Activated CD4-positive, alpha-beta T cell treated with anti-CD3 and anti-CD28 coated beads, Interleukin-2, amount 10 ng/mL, durations not matched to agents 24 days and 14 days (primary cell): ENCODE measurements at regions of chr21 and their contacts with region 1.

Region 1: DNA sequence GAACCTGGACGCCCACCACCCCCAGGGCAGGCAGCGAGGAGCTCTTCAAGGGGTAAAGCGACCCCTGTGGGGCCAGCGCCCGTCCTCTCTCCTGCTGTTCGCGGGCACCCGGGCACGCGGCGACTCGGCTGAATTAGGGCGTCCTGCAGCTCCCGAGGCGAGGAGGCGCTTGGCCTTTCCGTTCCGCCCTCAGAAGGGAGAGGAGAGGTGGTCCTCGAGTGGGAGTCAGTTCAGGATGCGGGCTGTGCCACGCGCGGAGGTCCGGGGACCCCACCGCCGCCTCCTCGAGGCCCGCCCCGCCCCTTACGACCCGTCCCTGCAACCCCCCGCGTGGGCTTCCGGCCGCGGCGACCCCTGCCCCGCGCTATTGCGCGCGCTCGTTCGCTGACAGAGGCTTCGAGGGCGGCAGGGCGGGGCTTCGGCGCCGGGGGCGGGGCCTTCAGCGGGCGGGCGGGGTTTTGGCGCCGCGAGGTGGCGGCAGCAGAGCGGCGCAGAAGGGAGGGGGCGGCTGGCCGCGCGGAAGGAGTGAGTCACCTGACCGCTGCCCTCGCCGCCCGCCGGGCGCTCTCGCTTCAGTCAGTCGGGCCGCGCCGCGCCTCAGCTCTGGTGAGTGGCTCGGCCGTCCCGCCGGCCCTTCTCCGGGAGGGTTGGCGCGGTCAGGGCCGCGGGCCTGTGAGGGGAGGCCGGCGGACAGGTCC is at the start of gene BACH1:
- DNase-seq: peak; percentile 94
- H3K4me3 Mint-ChIP-seq: peak within 1 kb of the TSS; percentile 91
- H3K27ac Mint-ChIP-seq: peak within 1 kb of the TSS; percentile 96
- H3K4me1 Mint-ChIP-seq: peaks cover 49% of the 10 kb centered on the region
- H3K27me3 Mint-ChIP-seq: no peaks in the 10 kb centered on the region
- total RNA-seq, gene BACH1: 21.5 and 24.8 TPM in 2 replicates

Region 2: GRCh38 chr21:28992526-28993292 is 305.8 kb before region 1 on chr21 and contains the start of gene LTN1:
- intact Hi-C with region 1: loop called (anchors 1 kb)
- DNase-seq: peak; percentile 100
- H3K4me3 Mint-ChIP-seq: peak within 1 kb of the TSS; percentile 94
- H3K27ac Mint-ChIP-seq: peak within 1 kb of the TSS; percentile 98
- H3K4me1 Mint-ChIP-seq: peaks cover 40% of the 10 kb centered on the region
- H3K27me3 Mint-ChIP-seq: peaks cover 2% of the 10 kb centered on the region
- total RNA-seq, gene LTN1: 25.6 and 31.0 TPM in 2 replicates

Region 3: GRCh38 chr21:29073222-29074006 is 225.1 kb before region 1 on chr21 and contains the start of gene CCT8:
- intact Hi-C with region 1: loop called (anchors 1 kb)
- DNase-seq: peak; percentile 99
- H3K4me3 Mint-ChIP-seq: peak within 1 kb of the TSS; percentile 100
- H3K27ac Mint-ChIP-seq: peak within 1 kb of the TSS; percentile 99
- H3K4me1 Mint-ChIP-seq: peaks cover 47% of the 10 kb centered on the region
- H3K27me3 Mint-ChIP-seq: no peaks in the 10 kb centered on the region
- total RNA-seq, gene CCT8: 432 and 438 TPM in 2 replicates

Region 4: GRCh38 chr21:29168886-29169285 is 129.6 kb before region 1 on chr21:
- intact Hi-C with region 1: no loop called
- DNase-seq: no peak
- H3K4me3 Mint-ChIP-seq: no peak overlapping the region
- H3K27ac Mint-ChIP-seq: no peak overlapping the region
- H3K4me1 Mint-ChIP-seq: peaks cover 18% of the 10 kb centered on the region
- H3K27me3 Mint-ChIP-seq: peaks cover 4% of the 10 kb centered on the region

Region 5: GRCh38 chr21:29195981-29196669 is 102.4 kb before region 1 on chr21:
- intact Hi-C with region 1: loop called (anchors 1 kb)
- DNase-seq: peak; percentile 92
- H3K4me3 Mint-ChIP-seq: peak overlapping the region; percentile 91
- H3K27ac Mint-ChIP-seq: peak overlapping the region; percentile 94
- H3K4me1 Mint-ChIP-seq: peaks cover 37% of the 10 kb centered on the region
- H3K27me3 Mint-ChIP-seq: no peaks in the 10 kb centered on the region

Region 6: GRCh38 chr21:29245104-29245643 is 53.3 kb before region 1 on chr21:
- intact Hi-C with region 1: loop called (anchors 1 kb)
- DNase-seq: no peak
- H3K4me3 Mint-ChIP-seq: no peak overlapping the region
- H3K27ac Mint-ChIP-seq: peak overlapping the region; percentile 72
- H3K4me1 Mint-ChIP-seq: peaks cover 11% of the 10 kb centered on the region
- H3K27me3 Mint-ChIP-seq: peaks cover 25% of the 10 kb centered on the region

Region 7: DNA sequence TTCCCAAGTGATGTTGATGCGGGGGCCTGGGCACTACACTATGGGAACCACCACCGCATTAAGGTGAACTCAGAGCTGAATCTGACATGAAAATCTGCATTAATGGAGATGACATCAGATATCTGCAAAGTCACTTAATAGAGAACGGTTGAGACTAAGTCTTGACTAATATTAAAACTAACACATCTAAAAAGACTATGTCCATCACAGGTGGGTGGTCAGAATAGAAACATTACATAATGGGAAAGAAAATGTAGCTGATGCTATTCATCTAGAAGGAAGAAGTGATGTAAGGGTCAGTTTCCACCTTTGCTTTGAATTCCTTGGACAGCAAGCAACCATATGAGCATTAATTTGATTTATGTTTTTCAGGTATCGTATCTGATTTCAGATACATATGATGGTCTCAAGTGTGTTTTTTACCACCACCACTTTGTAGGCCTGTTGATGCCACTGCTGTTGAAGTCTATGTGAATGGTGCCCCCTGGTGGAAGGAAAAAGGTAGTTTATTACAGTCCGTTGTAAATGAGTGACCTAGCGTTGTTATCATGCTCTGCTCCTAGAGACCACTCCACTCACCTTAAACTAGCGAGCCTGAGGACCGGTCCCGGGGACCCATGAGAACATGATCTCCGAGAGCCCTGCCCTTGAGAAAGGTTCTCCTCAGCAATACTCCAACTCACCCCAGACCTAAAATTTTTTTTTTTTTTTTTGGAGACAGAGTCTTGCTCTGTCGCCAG is 73.7 kb after region 1 on chr21:
- intact Hi-C with region 1: loop called (anchors 1 kb)
- DNase-seq: peak; percentile 89
- H3K4me3 Mint-ChIP-seq: no peak overlapping the region
- H3K27ac Mint-ChIP-seq: peak overlapping the region; percentile 57
- H3K4me1 Mint-ChIP-seq: peaks cover 18% of the 10 kb centered on the region
- H3K27me3 Mint-ChIP-seq: no peaks in the 10 kb centered on the region